ENCODE measurements at regions of chr9 and their contacts with region 1.

Region 1: GRCh38 chr9:4339357-4339756 is 39.5 kb upstream of the GLIS3 start:
- DNase-seq: peak; percentile 86
- H3K4me3 ChIP-seq: no peak overlapping the region
- H3K27ac ChIP-seq: no peak overlapping the region
- H3K4me1 ChIP-seq: peaks cover 6% of the 10 kb centered on the region
- H3K27me3 ChIP-seq: no peaks in the 10 kb centered on the region
- CTCF ChIP-seq: peak; percentile 85 to 97
- POLR2A ChIP-seq: no peak

Region 2: DNA sequence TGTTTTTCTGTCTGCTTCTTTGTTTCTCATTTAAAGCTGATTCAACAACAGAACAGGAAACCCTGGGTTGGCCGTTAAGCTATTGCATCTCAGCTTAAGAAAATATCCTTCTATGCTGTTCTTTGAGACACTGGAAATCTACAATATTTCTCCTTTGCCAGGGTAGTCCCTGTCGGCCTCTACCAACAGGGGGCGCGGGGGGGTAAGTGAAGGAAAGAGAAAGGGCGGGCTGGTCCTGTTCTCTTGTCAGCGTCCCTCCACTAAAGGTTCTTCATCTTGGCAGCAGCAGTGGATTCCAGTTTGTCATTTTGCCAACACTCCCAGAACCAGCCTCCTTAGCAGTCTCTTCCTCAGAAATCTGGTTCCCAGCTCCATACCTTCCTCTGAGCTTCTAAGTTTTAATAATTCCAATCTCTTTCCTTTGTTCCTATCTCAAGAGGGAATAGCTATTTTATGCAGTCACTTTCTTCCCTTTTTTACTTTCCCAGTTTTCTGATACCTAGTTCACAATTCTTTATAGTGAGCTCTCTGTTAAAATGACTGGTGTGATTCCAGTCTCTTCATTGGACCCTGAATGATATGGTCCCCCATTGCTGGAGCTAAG is 261.8 kb before region 1 on chr9:
- CTCF ChIA-PET with region 1: interaction called, 37 read pairs
- POLR2A ChIA-PET with region 1: no interaction called
- dilution Hi-C with region 1: no loop called
- intact Hi-C with region 1: loop called (anchors 1 kb)
- DNase-seq: peak; percentile 76
- H3K4me3 ChIP-seq: no peak overlapping the region
- H3K27ac ChIP-seq: no peak overlapping the region
- H3K4me1 ChIP-seq: peaks cover 2% of the 10 kb centered on the region
- H3K27me3 ChIP-seq: no peaks in the 10 kb centered on the region
- CTCF ChIP-seq: peak; percentile 83 to 85
- POLR2A ChIP-seq: no peak

Region 3: DNA sequence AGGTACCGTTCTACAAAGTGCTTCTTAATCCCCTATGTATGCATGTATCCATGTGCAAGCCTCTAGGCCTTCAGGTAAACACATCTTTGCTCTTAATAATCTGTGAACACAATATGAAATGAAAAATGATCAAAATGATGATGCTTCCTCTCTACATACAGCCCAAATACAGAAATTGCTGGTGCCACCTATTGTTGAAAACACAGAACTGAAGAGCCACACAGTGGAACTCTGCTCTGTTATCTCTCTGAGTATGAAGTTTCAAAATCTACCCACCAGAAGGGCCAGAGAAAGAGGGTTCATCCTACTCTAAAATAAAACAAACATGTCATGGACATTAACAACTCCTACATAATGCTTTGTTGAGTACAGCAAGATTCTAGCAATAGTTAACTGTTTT is 110.8 kb before region 1 on chr9:
- CTCF ChIA-PET with region 1: interaction called, 11 read pairs
- POLR2A ChIA-PET with region 1: no interaction called
- dilution Hi-C with region 1: no loop called
- intact Hi-C with region 1: no loop called
- DNase-seq: peak; percentile 25
- H3K4me3 ChIP-seq: no peak overlapping the region
- H3K27ac ChIP-seq: no peak overlapping the region
- H3K4me1 ChIP-seq: no peaks in the 10 kb centered on the region
- H3K27me3 ChIP-seq: peaks cover 0 to 2% of the 10 kb centered on the region in 2 experiments
- CTCF ChIP-seq: peak; percentile 11 to 42
- POLR2A ChIP-seq: no peak

Region 4: GRCh38 chr9:4327504-4328191 is 11.7 kb before region 1 on chr9:
- CTCF ChIA-PET with region 1: interaction called, 20 read pairs
- POLR2A ChIA-PET with region 1: no interaction called
- dilution Hi-C with region 1: no loop called
- intact Hi-C with region 1: loop called (anchors 1 kb)
- DNase-seq: peak; percentile 38
- H3K4me3 ChIP-seq: no peak overlapping the region
- H3K27ac ChIP-seq: no peak overlapping the region
- H3K4me1 ChIP-seq: peaks cover 13% of the 10 kb centered on the region
- H3K27me3 ChIP-seq: no peaks in the 10 kb centered on the region
- CTCF ChIP-seq: no peak
- POLR2A ChIP-seq: no peak

Region 5: GRCh38 chr9:4366591-4367330 is 27.4 kb after region 1 on chr9:
- CTCF ChIA-PET with region 1: interaction called, 26 read pairs
- POLR2A ChIA-PET with region 1: no interaction called
- dilution Hi-C with region 1: no loop called
- intact Hi-C with region 1: no loop called
- DNase-seq: peak; percentile 53
- H3K4me3 ChIP-seq: no peak overlapping the region
- H3K27ac ChIP-seq: no peak overlapping the region
- H3K4me1 ChIP-seq: no peaks in the 10 kb centered on the region
- H3K27me3 ChIP-seq: peaks cover 2 to 5% of the 10 kb centered on the region in 2 experiments
- CTCF ChIP-seq: peak; percentile 74 to 81
- POLR2A ChIP-seq: no peak